Activated naive CD4-positive, alpha-beta T cell treated with anti-CD3 and anti-CD28 coated beads for 36 hours (primary cell): ENCODE measurements at regions of chr12 and their contacts with region 1.

Region 1: GRCh38 chr12:15590180-15590826 is 198.9 kb downstream of the EPS8 start:
- DNase-seq: peak; percentile 63
- H3K4me3 Mint-ChIP-seq: peak overlapping the region; percentile 71
- H3K27ac Mint-ChIP-seq: peak overlapping the region; percentile 8
- H3K4me1 Mint-ChIP-seq: peaks cover 8% of the 10 kb centered on the region
- H3K27me3 Mint-ChIP-seq: no peaks in the 10 kb centered on the region

Region 2: DNA sequence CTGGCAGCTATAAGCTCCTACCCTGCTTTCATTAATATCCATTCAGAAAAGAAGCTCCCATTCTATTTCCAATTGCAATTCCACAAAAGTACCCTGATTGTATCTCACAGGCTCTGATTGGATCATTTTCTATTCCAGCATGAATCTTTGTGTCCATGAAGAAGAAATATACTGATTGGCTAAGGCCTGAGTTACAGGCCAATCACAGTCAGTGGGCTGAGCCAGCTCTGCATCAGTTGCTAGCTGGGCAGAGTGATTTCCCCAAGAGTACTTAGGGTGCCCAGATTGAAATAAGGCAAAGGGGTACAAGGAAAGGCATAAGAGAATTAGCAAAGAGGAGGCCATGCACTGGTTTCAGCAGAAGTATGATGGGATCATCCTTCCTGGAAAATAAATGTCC is 761.4 kb before region 1 on chr12:
- CTCF ChIA-PET with region 1: no interaction called
- intact Hi-C with region 1: no loop called
- DNase-seq: no peak
- H3K4me3 Mint-ChIP-seq: no peak overlapping the region
- H3K27ac Mint-ChIP-seq: no peak overlapping the region
- H3K4me1 Mint-ChIP-seq: peaks cover 14% of the 10 kb centered on the region
- H3K27me3 Mint-ChIP-seq: peaks cover under 1% of the 10 kb centered on the region

Region 3: GRCh38 chr12:15116086-15116485 is 474.2 kb before region 1 on chr12:
- CTCF ChIA-PET with region 1: no interaction called
- intact Hi-C with region 1: no loop called
- DNase-seq: no peak
- H3K4me3 Mint-ChIP-seq: no peak overlapping the region
- H3K27ac Mint-ChIP-seq: peak overlapping the region; percentile 32
- H3K4me1 Mint-ChIP-seq: no peaks in the 10 kb centered on the region
- H3K27me3 Mint-ChIP-seq: peaks cover 3% of the 10 kb centered on the region

Region 4: GRCh38 chr12:15276088-15276698 is 314.1 kb before region 1 on chr12:
- CTCF ChIA-PET with region 1: interaction called, 26 read pairs
- intact Hi-C with region 1: no loop called
- DNase-seq: no peak
- H3K4me3 Mint-ChIP-seq: no peak overlapping the region
- H3K27ac Mint-ChIP-seq: no peak overlapping the region
- H3K4me1 Mint-ChIP-seq: peaks cover 3% of the 10 kb centered on the region
- H3K27me3 Mint-ChIP-seq: peaks cover 5% of the 10 kb centered on the region

Region 5: DNA sequence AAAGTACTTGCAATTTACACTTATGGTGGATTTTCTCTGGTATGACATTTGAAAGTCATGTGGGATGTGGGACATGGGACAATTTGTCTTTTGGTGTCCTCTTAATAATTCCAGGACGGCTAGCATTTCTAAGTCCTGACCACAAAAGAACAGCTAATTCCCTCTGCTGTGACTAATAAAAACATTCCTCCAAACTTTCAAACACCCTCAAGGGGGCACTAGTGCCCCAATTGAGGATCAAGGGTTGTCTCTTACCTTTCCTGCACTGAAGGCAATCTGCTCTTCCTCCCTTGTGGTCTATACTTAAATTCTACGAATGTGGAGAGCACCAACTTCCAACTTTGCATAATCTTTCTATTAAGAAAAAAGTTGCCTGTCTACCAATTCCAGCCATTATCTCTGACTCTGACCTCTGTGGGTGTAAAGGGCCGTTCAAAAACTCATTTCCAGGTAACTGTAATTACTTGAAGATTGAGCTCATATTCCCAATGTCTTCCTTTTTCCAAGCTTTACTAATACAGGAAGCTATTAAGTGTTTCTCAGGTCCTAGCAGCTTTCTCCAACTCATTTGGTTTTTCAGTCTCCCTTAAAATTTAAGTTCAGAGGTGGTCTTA is 57.8 kb before region 1 on chr12:
- CTCF ChIA-PET with region 1: interaction called, 460 read pairs
- intact Hi-C with region 1: no loop called
- DNase-seq: peak; percentile 72
- H3K4me3 Mint-ChIP-seq: no peak overlapping the region
- H3K27ac Mint-ChIP-seq: no peak overlapping the region
- H3K4me1 Mint-ChIP-seq: peaks cover 18% of the 10 kb centered on the region
- H3K27me3 Mint-ChIP-seq: no peaks in the 10 kb centered on the region

Region 6: GRCh38 chr12:15772405-15773018 is 182.2 kb after region 1 on chr12:
- CTCF ChIA-PET with region 1: no interaction called
- intact Hi-C with region 1: loop called (anchors 5 kb)
- DNase-seq: no peak
- H3K4me3 Mint-ChIP-seq: no peak overlapping the region
- H3K27ac Mint-ChIP-seq: no peak overlapping the region
- H3K4me1 Mint-ChIP-seq: no peaks in the 10 kb centered on the region
- H3K27me3 Mint-ChIP-seq: peaks cover 7% of the 10 kb centered on the region

Region 7: DNA sequence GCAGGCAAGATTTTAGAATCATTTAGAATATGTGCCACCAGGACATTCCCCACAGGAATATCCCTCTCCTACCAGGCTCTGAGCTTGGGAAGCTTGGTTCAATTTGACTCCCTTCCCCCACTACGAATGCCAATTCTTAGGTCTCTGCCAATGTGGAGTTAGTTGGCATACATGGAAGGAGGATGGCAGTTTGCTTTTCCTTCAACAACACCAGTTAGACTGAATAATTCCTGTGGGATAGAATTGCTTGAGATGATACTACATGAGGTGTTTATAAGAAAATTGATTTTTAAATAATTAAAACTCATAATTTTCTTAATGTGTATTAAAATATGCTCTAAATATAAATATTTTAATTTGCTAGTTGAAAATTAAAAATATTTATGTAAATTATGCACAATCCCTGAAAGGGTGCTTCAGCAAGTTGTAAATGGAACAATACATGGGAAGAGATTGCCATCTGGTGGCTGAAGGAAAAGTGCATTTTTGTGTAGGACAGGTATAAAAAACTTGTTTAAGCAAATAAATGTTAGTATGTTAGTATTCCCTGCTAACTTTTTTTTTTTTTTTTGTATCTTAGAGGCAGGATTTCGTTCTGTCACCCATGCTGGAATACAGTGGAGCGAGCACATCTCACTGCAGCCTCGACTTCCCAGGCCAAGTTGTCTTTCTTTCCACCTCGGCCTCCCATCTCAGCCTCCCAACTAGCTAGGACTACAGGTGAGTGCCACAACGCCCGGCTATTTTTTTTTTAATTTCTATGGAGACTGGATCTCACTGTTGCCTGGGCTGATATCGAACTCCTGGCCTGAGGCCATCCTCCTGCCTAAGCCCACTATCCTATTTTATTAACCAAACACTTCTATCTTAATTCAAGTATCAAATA is 266.0 kb after region 1 on chr12:
- CTCF ChIA-PET with region 1: interaction called, 76 read pairs
- intact Hi-C with region 1: loop called (anchors 1 kb)
- DNase-seq: peak; percentile 66
- H3K4me3 Mint-ChIP-seq: no peak overlapping the region
- H3K27ac Mint-ChIP-seq: no peak overlapping the region
- H3K4me1 Mint-ChIP-seq: no peaks in the 10 kb centered on the region
- H3K27me3 Mint-ChIP-seq: peaks cover 3% of the 10 kb centered on the region

Region 8: GRCh38 chr12:17016116-17016864 is 1426.0 kb after region 1 on chr12:
- CTCF ChIA-PET with region 1: no interaction called
- intact Hi-C with region 1: no loop called
- DNase-seq: no peak
- H3K4me3 Mint-ChIP-seq: no peak overlapping the region
- H3K27ac Mint-ChIP-seq: no peak overlapping the region
- H3K4me1 Mint-ChIP-seq: no peaks in the 10 kb centered on the region
- H3K27me3 Mint-ChIP-seq: no peaks in the 10 kb centered on the region